Activated CD4-positive, alpha-beta T cell treated with anti-CD3 and anti-CD28 coated beads, Interleukin-2, amount 10 ng/mL, durations not matched to agents 24 days and 14 days (primary cell): ENCODE measurements at regions of chr1 and their contacts with region 1.

Region 1: DNA sequence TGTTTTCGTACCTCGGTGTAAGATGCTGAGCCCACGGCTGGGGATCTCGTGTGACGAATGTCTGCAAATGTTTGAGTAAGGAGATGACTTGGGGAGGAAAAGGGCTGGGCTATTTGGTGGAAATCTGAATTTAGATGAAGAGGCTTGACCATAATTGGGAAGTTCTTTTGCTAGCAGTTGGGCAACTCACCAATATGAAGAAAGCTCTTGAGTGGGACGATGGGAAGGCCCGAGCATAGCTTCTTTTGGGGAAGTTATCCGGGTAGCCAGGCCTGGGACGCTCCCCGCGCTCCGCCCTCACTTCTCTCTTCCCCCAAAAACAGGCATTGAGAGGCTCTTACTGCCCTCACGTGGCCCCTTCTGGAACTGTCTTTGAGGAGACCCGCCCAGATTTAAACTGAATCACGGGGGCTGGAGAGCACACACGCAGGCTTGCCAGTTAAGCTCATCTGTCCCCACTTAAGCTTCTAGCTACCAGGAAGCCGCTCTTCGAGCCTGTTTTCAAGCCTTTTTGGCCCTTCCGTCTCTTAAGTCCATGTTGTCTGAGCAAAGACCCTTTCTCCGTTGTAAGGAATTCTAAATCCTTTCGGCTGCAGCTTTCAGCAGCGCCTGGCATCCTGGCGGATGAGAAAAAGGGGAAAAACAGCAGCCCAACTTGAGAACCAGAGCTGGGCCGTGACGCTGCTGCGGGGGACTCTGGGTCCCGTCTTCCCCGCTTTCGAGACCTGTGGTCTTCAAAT is 93.1 kb downstream of the NID1 start:
- DNase-seq: peak; percentile 96
- H3K4me3 Mint-ChIP-seq: peak overlapping the region; percentile 77
- H3K27ac Mint-ChIP-seq: peak overlapping the region; percentile 85
- H3K4me1 Mint-ChIP-seq: peaks cover 16% of the 10 kb centered on the region
- H3K27me3 Mint-ChIP-seq: peaks cover 6% of the 10 kb centered on the region

Region 2: GRCh38 chr1:235802947-235803346 is 168.8 kb before region 1 on chr1:
- intact Hi-C with region 1: loop called (anchors 5 kb)
- DNase-seq: no peak
- H3K4me3 Mint-ChIP-seq: no peak overlapping the region
- H3K27ac Mint-ChIP-seq: no peak overlapping the region
- H3K4me1 Mint-ChIP-seq: no peaks in the 10 kb centered on the region
- H3K27me3 Mint-ChIP-seq: no peaks in the 10 kb centered on the region

Region 3: GRCh38 chr1:235910357-235911299 is 61.1 kb before region 1 on chr1:
- intact Hi-C with region 1: loop called (anchors 2 kb)
- DNase-seq: peak; percentile 69
- H3K4me3 Mint-ChIP-seq: peak overlapping the region; percentile 18
- H3K27ac Mint-ChIP-seq: peak overlapping the region; percentile 84
- H3K4me1 Mint-ChIP-seq: peaks cover 33% of the 10 kb centered on the region
- H3K27me3 Mint-ChIP-seq: peaks cover 4% of the 10 kb centered on the region

Region 4: GRCh38 chr1:235943581-235944114 is 28.1 kb before region 1 on chr1:
- intact Hi-C with region 1: no loop called
- DNase-seq: no peak
- H3K4me3 Mint-ChIP-seq: no peak overlapping the region
- H3K27ac Mint-ChIP-seq: no peak overlapping the region
- H3K4me1 Mint-ChIP-seq: peaks cover 35% of the 10 kb centered on the region
- H3K27me3 Mint-ChIP-seq: peaks cover 3% of the 10 kb centered on the region

Region 5: GRCh38 chr1:235954306-235955283 is 17.1 kb before region 1 on chr1:
- intact Hi-C with region 1: loop called (anchors 2 kb)
- DNase-seq: peak; percentile 78
- H3K4me3 Mint-ChIP-seq: no peak overlapping the region
- H3K27ac Mint-ChIP-seq: no peak overlapping the region
- H3K4me1 Mint-ChIP-seq: peaks cover 37% of the 10 kb centered on the region
- H3K27me3 Mint-ChIP-seq: peaks cover 2% of the 10 kb centered on the region